BJ (cell line): ENCODE measurements at regions of chr17 and their contacts with region 1.

Region 1: GRCh38 chr17:58560511-58560910 is 46.1 kb upstream of the MTMR4 start:
- DNase-seq: no peak
- H3K4me3 ChIP-seq: no peak overlapping the region
- H3K27me3 ChIP-seq: no peaks in the 10 kb centered on the region
- CTCF ChIP-seq: no peak

Region 2: GRCh38 chr17:58308173-58308984 is 252.1 kb before region 1 on chr17:
- CTCF ChIA-PET with region 1: no interaction called
- POLR2A ChIA-PET with region 1: no interaction called
- DNase-seq: no peak
- H3K4me3 ChIP-seq: no peak overlapping the region
- H3K27me3 ChIP-seq: no peaks in the 10 kb centered on the region
- CTCF ChIP-seq: peak; percentile 36

Region 3: GRCh38 chr17:58452521-58453137 is 107.9 kb before region 1 on chr17:
- CTCF ChIA-PET with region 1: no interaction called
- POLR2A ChIA-PET with region 1: no interaction called
- DNase-seq: no peak
- H3K4me3 ChIP-seq: no peak overlapping the region
- H3K27me3 ChIP-seq: no peaks in the 10 kb centered on the region
- CTCF ChIP-seq: no peak

Region 4: DNA sequence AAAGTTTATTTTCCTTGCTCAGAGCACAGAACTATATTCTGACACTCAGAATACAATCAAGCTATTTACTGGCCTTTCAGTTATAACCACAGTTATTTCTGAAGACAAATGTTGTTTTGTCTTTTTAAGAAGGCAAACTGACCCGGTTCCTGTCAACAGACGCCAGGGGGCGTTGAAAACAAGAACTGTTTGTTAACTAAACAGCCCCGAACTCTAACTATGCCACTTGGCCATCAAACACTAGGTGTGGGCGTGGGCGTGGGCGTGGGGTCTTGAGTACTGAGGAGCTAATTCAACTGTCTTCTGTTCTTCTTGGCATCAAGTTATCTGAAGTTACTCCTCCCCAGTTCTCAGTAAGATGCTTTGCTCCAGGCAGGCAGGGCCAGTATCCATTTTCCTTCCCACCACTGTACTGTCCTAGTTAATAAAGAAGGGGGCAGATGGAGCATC is 17.2 kb after region 1 on chr17:
- CTCF ChIA-PET with region 1: interaction called, 12 read pairs
- POLR2A ChIA-PET with region 1: no interaction called
- DNase-seq: no peak
- H3K4me3 ChIP-seq: no peak overlapping the region
- H3K27me3 ChIP-seq: no peaks in the 10 kb centered on the region; the same call in 1 of the 2 replicates
- CTCF ChIP-seq: peak; percentile 79